Heart right ventricle (tissue), 16 donors: ENCODE measurements at regions of chr1 and their contacts with region 1.

Region 1: DNA sequence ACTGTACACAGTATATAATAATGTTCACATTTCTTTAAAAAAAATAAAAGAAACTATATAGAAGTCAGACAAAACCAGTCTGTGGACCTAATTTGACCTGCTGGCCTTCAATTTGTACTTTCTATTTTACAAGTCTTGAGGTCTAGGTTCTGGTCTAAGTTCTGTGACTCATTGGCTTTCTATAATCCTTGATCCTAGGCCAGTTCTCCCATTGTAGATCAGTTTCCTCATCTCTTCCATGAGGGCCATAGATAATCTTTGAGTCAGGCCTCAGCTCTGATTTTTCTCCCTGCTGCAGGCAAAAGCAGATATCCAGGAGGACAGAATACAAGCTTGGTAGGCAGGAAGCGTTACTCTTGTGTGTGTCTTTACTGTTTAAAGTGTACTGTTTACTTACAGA is 603.7 kb upstream of the CAMK1G start:
- DNase-seq: no peak
- ATAC-seq: no peak
- H3K4me3 ChIP-seq: no peak overlapping the region
- H3K27ac ChIP-seq: no peak overlapping the region
- H3K4me1 ChIP-seq: peaks cover 0 to 8% (median 3%) of the 10 kb centered on the region in 9 donors
- H3K27me3 ChIP-seq: no peaks in the 10 kb centered on the region
- CTCF ChIP-seq: no peak

Region 2: GRCh38 chr1:209076688-209077087 is 96.9 kb after region 1 on chr1:
- intact Hi-C with region 1: no loop called
- DNase-seq: no peak
- ATAC-seq: no peak
- H3K4me3 ChIP-seq: no peak overlapping the region
- H3K27ac ChIP-seq: no peak overlapping the region
- H3K4me1 ChIP-seq: no peaks in the 10 kb centered on the region
- H3K27me3 ChIP-seq: peaks cover 0 to 3% (median 0%) of the 10 kb centered on the region in 7 donors
- CTCF ChIP-seq: peak in 1 of 9 donors; percentile 8

Region 3: GRCh38 chr1:209844695-209845407 is 865.1 kb after region 1 on chr1:
- intact Hi-C with region 1: loop called in 1 of 10 experiments (anchors 5 kb)
- DNase-seq: no peak
- ATAC-seq: peak in 2 of 8 donors; percentile 65 to 77
- H3K4me3 ChIP-seq: no peak overlapping the region
- H3K27ac ChIP-seq: no peak overlapping the region
- H3K4me1 ChIP-seq: peaks cover 0 to 15% (median 0%) of the 10 kb centered on the region in 9 donors
- H3K27me3 ChIP-seq: no peaks in the 10 kb centered on the region
- CTCF ChIP-seq: no peak